B cell (primary cell): ENCODE measurements at regions of chr9 and their contacts with region 1.

Region 1: GRCh38 chr9:127578955-127579853 is 32.9 kb upstream of the STXBP1 start:
- DNase-seq: no peak
- ATAC-seq: no peak
- H3K4me3 ChIP-seq: no peak overlapping the region
- H3K4me3 Mint-ChIP-seq: no peak overlapping the region
- H3K27ac ChIP-seq: no peak overlapping the region
- H3K27ac Mint-ChIP-seq: no peak overlapping the region
- H3K4me1 ChIP-seq: no peaks in the 10 kb centered on the region
- H3K4me1 Mint-ChIP-seq: peaks cover 2% of the 10 kb centered on the region
- H3K27me3 ChIP-seq: peaks cover 0 to 12% (median 4%) of the 10 kb centered on the region in 4 experiments
- H3K27me3 Mint-ChIP-seq: peaks cover 30% of the 10 kb centered on the region
- CTCF ChIP-seq: no peak

Region 2: GRCh38 chr9:129320575-129321263 is 1741.5 kb after region 1 on chr9:
- CTCF ChIA-PET with region 1: no interaction called
- POLR2A ChIA-PET with region 1: interaction called, 11 read pairs
- intact Hi-C with region 1: no loop called
- DNase-seq: peak; percentile 69
- ATAC-seq: peak; percentile 75
- H3K4me3 ChIP-seq: peak overlapping the region; percentile 32 to 55 (median 51)
- H3K4me3 Mint-ChIP-seq: peak overlapping the region; percentile 82
- H3K27ac ChIP-seq: no peak overlapping the region
- H3K27ac Mint-ChIP-seq: peak overlapping the region; percentile 51
- H3K4me1 ChIP-seq: peaks cover 10 to 16% of the 10 kb centered on the region in 2 donors
- H3K4me1 Mint-ChIP-seq: peaks cover 7% of the 10 kb centered on the region
- H3K27me3 ChIP-seq: peaks cover 0 to 33% (median 7%) of the 10 kb centered on the region in 4 experiments
- H3K27me3 Mint-ChIP-seq: peaks cover 19% of the 10 kb centered on the region
- CTCF ChIP-seq: no peak